ENCODE measurements at regions of chr16 and their contacts with region 1.

Region 1: GRCh38 chr16:12340151-12340733 is 363.7 kb downstream of the SNX29 start:
- DNase-seq: no peak
- ATAC-seq: no peak
- H3K4me3 ChIP-seq: no peak overlapping the region
- H3K27ac ChIP-seq: no peak overlapping the region
- H3K4me1 ChIP-seq: peaks cover 9 to 25% of the 10 kb centered on the region in 2 donors
- H3K27me3 ChIP-seq: no peaks in the 10 kb centered on the region
- CTCF ChIP-seq: no peak
- POLR2A ChIP-seq: no peak

Region 2: DNA sequence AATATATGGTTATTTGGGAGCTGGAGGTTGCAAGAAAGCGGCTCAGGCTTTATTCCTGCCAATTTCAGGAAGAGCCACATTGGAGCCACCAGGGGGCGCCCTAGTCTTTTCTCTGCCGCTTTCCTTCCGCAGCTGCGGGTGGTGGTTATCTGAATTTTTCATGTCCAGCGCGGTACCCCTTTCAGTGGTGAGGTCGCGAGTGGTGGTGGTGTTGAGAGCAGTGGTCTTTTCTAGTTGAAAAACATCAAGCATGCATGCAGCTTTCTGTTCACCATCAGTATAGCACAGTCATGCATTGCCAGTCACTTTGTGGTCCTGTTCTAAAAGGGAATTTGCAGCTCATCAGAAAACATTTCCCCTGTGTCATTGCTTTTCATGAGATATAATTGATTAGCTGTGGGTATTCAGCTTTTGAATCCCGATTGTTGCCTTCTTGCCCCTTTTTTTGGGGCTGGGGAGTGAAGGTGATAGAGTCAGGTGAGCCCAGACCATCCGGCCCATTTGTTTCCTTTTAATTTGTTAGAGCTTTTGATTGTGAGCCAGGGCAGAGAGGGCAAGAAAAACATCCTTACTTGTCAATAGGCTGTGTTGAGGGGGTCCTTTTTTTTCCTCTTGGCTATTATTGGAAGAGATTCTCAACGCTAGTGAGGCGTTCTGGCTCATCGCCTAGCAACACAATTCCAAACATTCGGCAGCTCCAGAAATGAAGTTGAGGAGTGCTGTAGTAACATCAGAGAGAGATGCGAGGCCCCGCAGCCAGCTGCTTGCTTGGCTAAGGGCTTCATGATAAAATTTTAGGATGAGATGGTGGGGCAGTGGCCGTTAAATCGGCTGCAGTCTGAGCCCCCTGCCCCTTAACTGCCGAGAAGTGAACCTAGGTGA is 244.7 kb before region 1 on chr16:
- in situ Hi-C with region 1: no loop called
- intact Hi-C with region 1: loop called (anchors 1 kb)
- DNase-seq: peak in 1 of 2 donors; percentile 33
- ATAC-seq: peak; percentile 39 to 45
- H3K4me3 ChIP-seq: peak overlapping the region; percentile 11 to 35 (median 24)
- H3K27ac ChIP-seq: no peak overlapping the region
- H3K4me1 ChIP-seq: peaks cover 21 to 22% of the 10 kb centered on the region in 2 donors
- H3K27me3 ChIP-seq: no peaks in the 10 kb centered on the region
- CTCF ChIP-seq: peak; percentile 78 to 92 (median 85)
- POLR2A ChIP-seq: no peak

Region 3: GRCh38 chr16:12228602-12229499 is 111.4 kb before region 1 on chr16:
- in situ Hi-C with region 1: no loop called
- intact Hi-C with region 1: loop called (anchors 5 kb)
- DNase-seq: no peak
- ATAC-seq: no peak
- H3K4me3 ChIP-seq: no peak overlapping the region
- H3K27ac ChIP-seq: no peak overlapping the region
- H3K4me1 ChIP-seq: no peaks in the 10 kb centered on the region
- H3K27me3 ChIP-seq: no peaks in the 10 kb centered on the region
- CTCF ChIP-seq: peak in 3 of 5 experiments; percentile 26 to 43 (median 26)
- POLR2A ChIP-seq: no peak

Region 4: DNA sequence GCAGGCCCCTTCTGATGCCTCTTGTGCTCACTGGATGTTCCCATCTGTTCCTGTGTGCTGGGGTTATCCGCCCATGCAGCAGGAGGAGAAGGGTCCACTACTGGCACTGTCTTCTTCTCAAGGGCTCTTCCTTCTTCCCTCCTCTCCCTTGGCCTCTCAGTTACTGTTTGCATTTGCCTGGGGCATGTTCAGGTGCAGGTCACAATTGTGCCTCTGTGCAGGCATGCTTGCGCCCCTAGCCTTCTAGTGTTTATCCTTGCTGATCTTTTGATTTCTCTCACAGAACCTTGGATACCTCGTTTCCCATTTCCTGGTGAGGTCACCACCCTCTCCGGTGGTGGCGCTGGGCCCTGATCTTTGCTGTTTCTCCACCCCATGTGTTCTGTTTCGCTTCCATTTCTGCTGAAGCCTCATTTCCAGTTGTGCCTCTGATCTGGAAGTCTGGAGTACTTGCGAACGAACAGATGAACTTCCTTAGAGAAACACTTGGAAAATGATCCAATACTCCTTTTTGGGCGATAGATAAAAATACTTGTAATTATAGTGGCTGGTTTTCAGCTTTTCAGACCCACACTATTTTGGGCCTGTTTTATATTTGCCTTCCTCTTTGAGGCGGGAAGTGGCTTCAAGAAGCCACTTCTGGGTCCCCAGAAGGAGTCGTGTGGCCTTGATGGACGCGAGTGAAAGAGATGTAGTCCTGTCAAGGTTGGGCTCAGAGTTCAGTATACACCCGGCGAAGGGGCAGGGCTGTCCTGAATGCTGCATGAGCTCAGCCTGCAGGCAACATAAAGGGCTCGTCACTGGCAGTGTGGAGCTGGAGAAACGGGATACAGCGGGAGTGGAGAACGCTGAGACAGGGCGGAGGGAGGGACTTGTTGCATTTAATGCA is 50.8 kb before region 1 on chr16:
- in situ Hi-C with region 1: no loop called
- intact Hi-C with region 1: no loop called
- DNase-seq: no peak
- ATAC-seq: no peak
- H3K4me3 ChIP-seq: no peak overlapping the region
- H3K27ac ChIP-seq: no peak overlapping the region
- H3K4me1 ChIP-seq: no peaks in the 10 kb centered on the region
- H3K27me3 ChIP-seq: no peaks in the 10 kb centered on the region
- CTCF ChIP-seq: no peak
- POLR2A ChIP-seq: no peak

Measured in gastrocnemius medialis (tissue), 4 donors.